Prostate gland (tissue), 2 donors: ENCODE measurements at regions of chr12 and their contacts with region 1.

Region 1: GRCh38 chr12:53251477-53252348 is 16.4 kb upstream of the ESPL1 start:
- DNase-seq: peak; percentile 73
- H3K4me3 ChIP-seq: peak overlapping the region; percentile 81 to 87
- H3K27ac ChIP-seq: peak overlapping the region; percentile 85 to 96
- H3K4me1 ChIP-seq: peaks cover 24% of the 10 kb centered on the region
- H3K27me3 ChIP-seq: no peaks in the 10 kb centered on the region
- CTCF ChIP-seq: peak in 3 of 4 experiments; percentile 33 to 63 (median 58)
- POLR2A ChIP-seq: peak; percentile 40

Region 2: DNA sequence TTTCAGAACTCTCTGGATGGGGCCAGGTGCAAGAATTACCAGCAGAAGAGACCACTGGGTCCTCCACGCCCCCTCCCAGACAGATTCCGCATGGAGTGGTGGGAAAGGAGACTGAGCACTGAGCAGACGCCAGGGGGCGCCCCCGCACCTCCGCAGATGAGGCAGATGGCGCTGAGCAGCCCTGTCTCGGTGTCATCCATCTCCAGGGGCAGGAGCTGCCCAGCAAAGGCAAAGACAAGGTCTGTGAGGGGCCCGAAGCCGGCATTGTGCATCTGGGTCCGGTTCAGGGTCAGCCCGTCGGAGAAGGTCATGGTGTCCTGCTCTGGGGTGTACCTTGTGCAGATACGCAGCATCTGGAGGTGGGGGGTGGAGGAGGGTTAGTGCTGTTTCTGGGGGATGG is 38.4 kb before region 1 on chr12:
- intact Hi-C with region 1: loop called (anchors 2 kb)
- DNase-seq: peak; percentile 78
- H3K4me3 ChIP-seq: no peak overlapping the region
- H3K27ac ChIP-seq: no peak overlapping the region
- H3K4me1 ChIP-seq: peaks cover 16% of the 10 kb centered on the region
- H3K27me3 ChIP-seq: no peaks in the 10 kb centered on the region
- CTCF ChIP-seq: peak; percentile 83 to 98 (median 96)
- POLR2A ChIP-seq: no peak

Region 3: GRCh38 chr12:53232646-53233461 is 18.9 kb before region 1 on chr12:
- intact Hi-C with region 1: loop called (anchors 1 kb)
- DNase-seq: peak; percentile 52
- H3K4me3 ChIP-seq: peak overlapping the region; percentile 56 to 57
- H3K27ac ChIP-seq: peak overlapping the region; percentile 83 to 89
- H3K4me1 ChIP-seq: peaks cover 10% of the 10 kb centered on the region
- H3K27me3 ChIP-seq: no peaks in the 10 kb centered on the region
- CTCF ChIP-seq: no peak
- POLR2A ChIP-seq: peak; percentile 43

Region 4: DNA sequence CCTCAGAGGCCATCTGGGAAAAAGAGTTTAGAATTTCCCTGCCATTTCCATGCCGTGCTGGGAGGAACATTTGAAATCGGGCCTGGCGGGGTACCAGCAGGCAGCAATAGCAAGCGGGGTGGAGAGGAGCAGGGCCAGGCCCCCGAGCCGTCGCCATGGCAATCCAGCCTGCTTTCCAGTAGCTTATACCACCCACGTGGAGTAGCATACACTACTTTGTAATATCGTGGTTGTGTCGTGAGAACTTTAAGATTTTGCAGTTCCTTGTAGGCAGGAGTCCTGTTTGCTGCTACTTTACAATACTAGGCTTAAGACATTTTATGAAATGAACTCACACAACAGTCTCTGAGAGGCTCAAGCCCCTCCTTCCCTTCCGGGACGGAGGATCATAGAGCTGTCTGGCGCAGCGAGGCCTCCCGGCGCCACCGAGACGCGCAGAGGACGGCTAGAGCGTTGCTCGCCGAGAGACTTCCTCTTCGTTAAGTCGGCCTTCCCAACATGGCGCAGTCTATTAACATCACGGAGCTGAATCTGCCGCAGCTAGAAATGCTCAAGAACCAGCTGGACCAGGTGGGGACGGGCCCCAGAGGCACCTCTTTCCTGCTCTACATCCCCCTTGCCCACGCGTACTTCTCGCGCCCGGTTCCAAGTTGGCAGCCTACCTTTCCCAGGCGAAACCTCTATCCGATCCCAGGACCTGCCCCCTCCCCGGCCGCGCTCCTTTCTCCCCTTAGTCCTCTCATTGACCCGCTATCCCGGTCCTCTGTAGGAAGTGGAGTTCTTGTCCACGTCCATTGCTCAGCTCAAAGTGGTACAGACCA is 43.6 kb after region 1 on chr12 and contains the start of gene PFDN5:
- intact Hi-C with region 1: loop called (anchors 5 kb)
- DNase-seq: peak; percentile 89
- H3K4me3 ChIP-seq: peak within 1 kb of the TSS; percentile 58 to 87
- H3K27ac ChIP-seq: peak within 1 kb of the TSS; percentile 77 to 79
- H3K4me1 ChIP-seq: peaks cover 3% of the 10 kb centered on the region
- H3K27me3 ChIP-seq: no peaks in the 10 kb centered on the region
- CTCF ChIP-seq: peak in 2 of 4 experiments; percentile 48 to 53
- POLR2A ChIP-seq: peak; percentile 74
- total RNA-seq, gene PFDN5: 552 to 673 TPM